ENCODE measurements at regions of chr2 and their contacts with region 1.

Region 1: GRCh38 chr2:136510244-136510643 is 255.1 kb upstream of the THSD7B start:
- DNase-seq: no peak
- ATAC-seq: no peak
- H3K4me3 Mint-ChIP-seq: no peak overlapping the region
- H3K27ac Mint-ChIP-seq: no peak overlapping the region
- H3K4me1 Mint-ChIP-seq: no peaks in the 10 kb centered on the region
- H3K27me3 Mint-ChIP-seq: peaks cover 11% of the 10 kb centered on the region
- CTCF ChIP-seq: no peak

Region 2: GRCh38 chr2:136117909-136118818 is 392.1 kb before region 1 on chr2 and contains the start of gene CXCR4:
- CTCF ChIA-PET with region 1: no interaction called
- POLR2A ChIA-PET with region 1: no interaction called
- intact Hi-C with region 1: no loop called
- DNase-seq: peak; percentile 87
- ATAC-seq: peak; percentile 40
- H3K4me3 Mint-ChIP-seq: peak within 1 kb of the TSS; percentile 96
- H3K27ac Mint-ChIP-seq: peak within 1 kb of the TSS; percentile 95
- H3K4me1 Mint-ChIP-seq: peaks cover 56% of the 10 kb centered on the region
- H3K27me3 Mint-ChIP-seq: no peaks in the 10 kb centered on the region
- CTCF ChIP-seq: no peak
- total RNA-seq, gene CXCR4: 97.0 to 103 TPM

Region 3: GRCh38 chr2:136497709-136498108 is 12.5 kb before region 1 on chr2:
- CTCF ChIA-PET with region 1: interaction called, 10 read pairs
- POLR2A ChIA-PET with region 1: no interaction called
- intact Hi-C with region 1: no loop called
- DNase-seq: no peak
- ATAC-seq: no peak
- H3K4me3 Mint-ChIP-seq: no peak overlapping the region
- H3K27ac Mint-ChIP-seq: no peak overlapping the region
- H3K4me1 Mint-ChIP-seq: no peaks in the 10 kb centered on the region
- H3K27me3 Mint-ChIP-seq: peaks cover 1% of the 10 kb centered on the region
- CTCF ChIP-seq: no peak